Vagina (tissue), 2 donors: ENCODE measurements at regions of chr13 and their contacts with region 1.

Region 1: GRCh38 chr13:63351533-63351932 is 1935.9 kb upstream of the PCDH20 start:
- DNase-seq: no peak
- H3K4me3 ChIP-seq: no peak overlapping the region
- H3K27ac ChIP-seq: no peak overlapping the region
- H3K4me1 ChIP-seq: no peaks in the 10 kb centered on the region
- H3K27me3 ChIP-seq: no peaks in the 10 kb centered on the region
- CTCF ChIP-seq: no peak
- POLR2A ChIP-seq: no peak

Region 2: DNA sequence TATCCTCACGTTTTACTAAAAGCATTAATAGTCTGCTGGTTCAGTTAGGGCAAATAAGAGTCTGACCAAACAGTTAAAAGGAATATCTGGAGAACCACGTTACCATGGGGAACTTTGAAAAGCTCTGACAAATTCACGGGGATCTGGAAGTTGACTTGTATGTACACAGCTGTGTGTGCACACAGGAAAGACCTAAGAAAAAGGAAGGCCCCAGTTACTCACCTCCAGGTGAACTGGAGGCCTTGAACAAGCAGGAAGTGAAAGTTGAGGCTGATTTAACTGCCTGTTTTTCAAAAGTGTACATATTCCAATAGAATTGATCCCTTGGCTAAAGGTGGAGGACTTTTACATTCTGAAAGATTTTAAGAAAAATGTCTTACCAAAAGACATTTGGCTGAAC is 44.3 kb before region 1 on chr13:
- intact Hi-C with region 1: loop called (anchors 2 kb)
- DNase-seq: no peak
- H3K4me3 ChIP-seq: no peak overlapping the region
- H3K27ac ChIP-seq: no peak overlapping the region
- H3K4me1 ChIP-seq: no peaks in the 10 kb centered on the region
- H3K27me3 ChIP-seq: no peaks in the 10 kb centered on the region
- CTCF ChIP-seq: no peak
- POLR2A ChIP-seq: no peak

Region 3: GRCh38 chr13:63700350-63700749 is 348.8 kb after region 1 on chr13:
- intact Hi-C with region 1: no loop called
- DNase-seq: no peak
- H3K4me3 ChIP-seq: no peak overlapping the region
- H3K27ac ChIP-seq: no peak overlapping the region
- H3K4me1 ChIP-seq: no peaks in the 10 kb centered on the region
- H3K27me3 ChIP-seq: no peaks in the 10 kb centered on the region
- CTCF ChIP-seq: no peak
- POLR2A ChIP-seq: no peak